ENCODE measurements at regions of chr4 and their contacts with region 1.

Region 1: GRCh38 chr4:15457406-15458201 is 12.1 kb upstream of the CC2D2A start:
- DNase-seq: peak; percentile 32
- H3K4me3 ChIP-seq: no peak overlapping the region; a peak in 1 of 4 replicates
- H3K27ac ChIP-seq: peak overlapping the region in 1 of 2 experiments; percentile 17; a peak in 1 of 4 replicates
- H3K4me1 ChIP-seq: peaks cover 3 to 4% of the 10 kb centered on the region in 2 experiments; a peak in 2 of 4 replicates
- H3K27me3 ChIP-seq: no peaks in the 10 kb centered on the region
- CTCF ChIP-seq: peak; percentile 83
- EP300 ChIP-seq: no peak
- RAD21 ChIP-seq: peak; percentile 89

Region 2: DNA sequence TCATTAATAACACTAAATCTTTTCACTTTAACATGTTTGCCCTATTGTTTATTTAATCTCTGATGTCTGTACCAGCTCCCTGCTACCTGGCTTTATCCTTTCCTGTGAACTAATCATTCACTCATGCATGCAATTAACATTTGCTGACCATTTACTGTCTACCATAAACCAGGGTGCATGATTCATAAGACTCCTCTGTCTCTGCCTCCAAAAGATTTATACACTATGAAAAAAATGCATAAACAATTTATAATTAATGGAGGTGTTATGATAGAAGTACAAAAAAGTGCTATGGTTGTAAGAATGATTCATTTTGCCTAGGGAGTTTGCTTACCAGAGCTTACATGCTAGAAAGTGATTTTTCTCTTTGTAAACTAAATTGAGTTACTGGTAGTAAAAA is 479.8 kb before region 1 on chr4:
- CTCF ChIA-PET with region 1: no interaction called
- POLR2A ChIA-PET with region 1: no interaction called
- DNase-seq: no peak
- H3K4me3 ChIP-seq: no peak overlapping the region
- H3K27ac ChIP-seq: no peak overlapping the region
- H3K4me1 ChIP-seq: no peaks in the 10 kb centered on the region
- H3K27me3 ChIP-seq: no peaks in the 10 kb centered on the region
- CTCF ChIP-seq: no peak
- EP300 ChIP-seq: no peak
- RAD21 ChIP-seq: no peak

Region 3: DNA sequence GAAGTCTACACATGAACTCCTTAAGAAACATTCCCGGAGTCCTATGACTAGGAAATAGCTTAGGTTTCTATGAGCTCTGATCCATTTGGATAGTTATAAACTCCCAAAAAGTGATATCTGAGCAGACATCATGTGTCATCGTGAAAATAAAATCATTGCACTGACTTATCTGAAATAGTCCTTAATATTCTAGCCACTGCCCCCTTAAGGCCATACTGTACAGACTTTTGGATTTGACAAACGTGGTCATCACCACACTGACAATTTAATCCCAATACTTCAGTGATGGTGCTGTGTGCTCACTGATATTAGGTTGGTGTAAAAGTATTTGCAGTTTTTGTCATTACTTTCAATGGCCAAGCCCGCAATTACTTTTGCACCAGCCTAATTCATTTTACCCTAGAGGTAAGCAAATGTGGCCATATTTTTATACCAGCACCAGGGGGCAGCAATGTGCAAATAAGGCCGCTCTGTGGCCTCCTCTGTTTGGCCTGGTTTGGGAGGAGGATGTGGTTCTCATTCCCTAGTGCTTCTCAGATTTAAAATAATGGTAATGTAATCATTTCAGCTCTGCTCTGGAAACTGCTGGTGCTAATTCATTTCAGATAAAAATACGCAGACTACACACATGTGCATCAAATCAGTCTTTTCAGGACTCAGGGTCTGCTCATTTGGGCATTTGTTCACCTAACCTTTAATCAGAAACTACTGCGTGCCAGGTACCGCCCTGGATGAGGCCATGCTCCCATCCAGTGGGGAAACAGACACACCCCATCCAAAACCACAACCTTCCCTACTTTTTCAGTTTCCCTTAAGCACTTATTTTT is 226.1 kb before region 1 on chr4:
- CTCF ChIA-PET with region 1: interaction called, 64 read pairs
- POLR2A ChIA-PET with region 1: no interaction called
- DNase-seq: peak; percentile 77
- H3K4me3 ChIP-seq: no peak overlapping the region; a peak in 1 of 4 replicates
- H3K27ac ChIP-seq: peak overlapping the region in 1 of 2 experiments; percentile 74; a peak in 2 of 4 replicates
- H3K4me1 ChIP-seq: peaks cover 13 to 26% of the 10 kb centered on the region in 2 experiments
- H3K27me3 ChIP-seq: no peaks in the 10 kb centered on the region
- CTCF ChIP-seq: peak; percentile 86
- EP300 ChIP-seq: no peak; a peak in 1 of 4 replicates
- RAD21 ChIP-seq: peak; percentile 93

Region 4: GRCh38 chr4:15245006-15245530 is 212.5 kb before region 1 on chr4:
- CTCF ChIA-PET with region 1: interaction called, 11 read pairs
- POLR2A ChIA-PET with region 1: no interaction called
- DNase-seq: peak; percentile 21
- H3K4me3 ChIP-seq: no peak overlapping the region
- H3K27ac ChIP-seq: no peak overlapping the region
- H3K4me1 ChIP-seq: peaks cover under 1 to 7% of the 10 kb centered on the region in 2 experiments; a peak in 1 of 4 replicates
- H3K27me3 ChIP-seq: no peaks in the 10 kb centered on the region
- CTCF ChIP-seq: no peak
- EP300 ChIP-seq: no peak
- RAD21 ChIP-seq: no peak

Region 5: GRCh38 chr4:15336410-15337172 is 121.0 kb before region 1 on chr4:
- CTCF ChIA-PET with region 1: no interaction called
- POLR2A ChIA-PET with region 1: no interaction called
- DNase-seq: no peak
- H3K4me3 ChIP-seq: no peak overlapping the region
- H3K27ac ChIP-seq: peak overlapping the region in 1 of 2 experiments; percentile 14; a peak in 1 of 4 replicates
- H3K4me1 ChIP-seq: peaks cover 8 to 11% of the 10 kb centered on the region in 2 experiments
- H3K27me3 ChIP-seq: no peaks in the 10 kb centered on the region
- CTCF ChIP-seq: no peak
- EP300 ChIP-seq: 0 out of 4 replicates have a peak, but pooled peaks of 1 of the 2 experiments have one; percentile 19
- RAD21 ChIP-seq: no peak

Region 6: GRCh38 chr4:15396157-15396800 is 61.3 kb before region 1 on chr4:
- CTCF ChIA-PET with region 1: interaction called, 13 read pairs
- POLR2A ChIA-PET with region 1: no interaction called
- DNase-seq: peak; percentile 33
- H3K4me3 ChIP-seq: no peak overlapping the region; a peak in 1 of 4 replicates
- H3K27ac ChIP-seq: no peak overlapping the region
- H3K4me1 ChIP-seq: peaks cover 11 to 13% of the 10 kb centered on the region in 2 experiments; a peak in 2 of 4 replicates
- H3K27me3 ChIP-seq: no peaks in the 10 kb centered on the region
- CTCF ChIP-seq: peak; percentile 73
- EP300 ChIP-seq: no peak
- RAD21 ChIP-seq: peak; percentile 78

Region 7: DNA sequence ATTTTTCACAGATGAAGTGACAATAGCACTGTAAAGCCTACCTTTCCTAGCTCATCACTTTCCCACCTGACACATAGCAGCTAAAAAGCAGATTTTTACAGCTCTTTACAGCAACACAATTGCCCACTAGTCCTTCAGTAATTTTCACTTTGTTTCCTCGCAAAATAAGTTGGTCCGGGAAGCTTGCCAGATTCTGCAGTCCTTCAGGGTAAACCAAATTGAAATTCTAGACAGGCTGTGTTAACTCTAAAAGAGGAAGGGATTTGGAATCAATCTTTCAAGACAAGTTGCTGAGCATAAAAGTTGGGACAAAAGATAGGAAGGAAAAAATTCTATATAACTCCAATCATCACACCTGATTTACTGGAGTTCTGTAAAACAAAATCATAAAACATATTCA is 21.1 kb before region 1 on chr4:
- CTCF ChIA-PET with region 1: interaction called, 13 read pairs
- POLR2A ChIA-PET with region 1: no interaction called
- DNase-seq: peak; percentile 32
- H3K4me3 ChIP-seq: no peak overlapping the region
- H3K27ac ChIP-seq: peak overlapping the region in 1 of 2 experiments; percentile 89; a peak in 2 of 4 replicates
- H3K4me1 ChIP-seq: peaks cover 8 to 19% of the 10 kb centered on the region in 2 experiments; a peak in 3 of 4 replicates
- H3K27me3 ChIP-seq: no peaks in the 10 kb centered on the region
- CTCF ChIP-seq: no peak
- EP300 ChIP-seq: 0 out of 4 replicates have a peak, but pooled peaks of 1 of the 2 experiments have one; percentile 4
- RAD21 ChIP-seq: no peak

Region 8: GRCh38 chr4:15479089-15479912 is 21.7 kb after region 1 on chr4:
- CTCF ChIA-PET with region 1: interaction called, 14 read pairs
- POLR2A ChIA-PET with region 1: no interaction called
- DNase-seq: peak; percentile 74
- H3K4me3 ChIP-seq: peak overlapping the region; percentile 49 to 55
- H3K27ac ChIP-seq: peak overlapping the region; percentile 58 to 93
- H3K4me1 ChIP-seq: peaks cover 10% of the 10 kb centered on the region in 2 experiments; a peak in 3 of 4 replicates
- H3K27me3 ChIP-seq: no peaks in the 10 kb centered on the region
- CTCF ChIP-seq: peak; percentile 79
- EP300 ChIP-seq: no peak
- RAD21 ChIP-seq: peak; percentile 94

Region 9: GRCh38 chr4:16461362-16461761 is 1003.8 kb after region 1 on chr4:
- CTCF ChIA-PET with region 1: no interaction called
- POLR2A ChIA-PET with region 1: no interaction called
- DNase-seq: no peak
- H3K4me3 ChIP-seq: no peak overlapping the region
- H3K27ac ChIP-seq: no peak overlapping the region
- H3K4me1 ChIP-seq: no peaks in the 10 kb centered on the region
- H3K27me3 ChIP-seq: no peaks in the 10 kb centered on the region
- CTCF ChIP-seq: no peak
- EP300 ChIP-seq: no peak
- RAD21 ChIP-seq: no peak